ENCODE measurements at regions of chr4 and their contacts with region 1.

Region 1: DNA sequence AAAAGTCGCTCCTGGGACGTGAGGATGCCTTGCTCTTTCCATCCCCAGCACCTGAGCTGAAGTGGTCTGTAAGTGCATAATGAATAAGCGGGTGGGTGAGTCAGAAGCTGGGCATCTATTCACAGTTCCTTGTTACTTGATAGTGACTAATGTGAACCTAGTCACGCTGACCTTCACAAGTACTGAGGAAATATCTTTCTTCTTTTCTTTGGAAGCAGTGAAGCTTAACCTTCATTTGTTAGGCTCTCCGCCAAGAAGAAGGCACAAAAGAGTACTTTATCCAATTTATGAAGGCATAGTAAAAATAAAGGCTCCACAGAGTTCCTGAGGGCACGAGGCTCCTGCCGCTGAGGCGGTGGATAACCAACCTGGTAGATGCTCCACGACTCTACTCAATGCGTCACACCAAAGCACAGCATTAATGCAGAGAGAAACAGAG is 475.7 kb upstream of the SLIT2 start:
- DNase-seq: peak; percentile 96
- ATAC-seq: peak; percentile 93
- H3K4me3 ChIP-seq: peak overlapping the region; percentile 43; the same call in 1 of the 2 replicates
- H3K27ac ChIP-seq: peak overlapping the region; percentile 85
- H3K4me1 ChIP-seq: peaks cover 30% of the 10 kb centered on the region
- H3K27me3 ChIP-seq: no peaks in the 10 kb centered on the region
- CTCF ChIP-seq: no peak

Region 2: DNA sequence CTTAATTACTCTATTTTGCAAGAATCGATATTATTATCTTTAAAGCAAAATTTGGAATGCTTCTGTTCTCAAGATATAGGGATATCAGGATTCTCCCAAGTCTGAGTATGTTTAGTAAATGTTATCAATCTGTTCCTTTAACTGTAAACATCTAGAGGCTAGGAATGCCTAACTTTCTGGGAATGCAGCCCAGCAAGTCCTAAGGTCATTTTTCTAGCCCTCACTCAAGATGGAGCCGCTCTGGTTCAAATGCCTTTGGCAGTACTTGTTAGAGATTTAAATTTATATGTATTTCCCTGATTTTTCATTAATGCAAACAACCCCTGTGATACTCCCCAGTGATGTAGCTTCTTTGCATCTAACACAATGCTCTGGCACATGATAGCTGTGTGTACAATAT is 1130.7 kb before region 1 on chr4:
- CTCF ChIA-PET with region 1: no interaction called
- POLR2A ChIA-PET with region 1: interaction called, 19 read pairs
- intact Hi-C with region 1: no loop called
- DNase-seq: no peak
- ATAC-seq: no peak
- H3K4me3 ChIP-seq: no peak overlapping the region
- H3K27ac ChIP-seq: no peak overlapping the region
- H3K4me1 ChIP-seq: no peaks in the 10 kb centered on the region
- H3K27me3 ChIP-seq: no peaks in the 10 kb centered on the region
- CTCF ChIP-seq: no peak

Region 3: DNA sequence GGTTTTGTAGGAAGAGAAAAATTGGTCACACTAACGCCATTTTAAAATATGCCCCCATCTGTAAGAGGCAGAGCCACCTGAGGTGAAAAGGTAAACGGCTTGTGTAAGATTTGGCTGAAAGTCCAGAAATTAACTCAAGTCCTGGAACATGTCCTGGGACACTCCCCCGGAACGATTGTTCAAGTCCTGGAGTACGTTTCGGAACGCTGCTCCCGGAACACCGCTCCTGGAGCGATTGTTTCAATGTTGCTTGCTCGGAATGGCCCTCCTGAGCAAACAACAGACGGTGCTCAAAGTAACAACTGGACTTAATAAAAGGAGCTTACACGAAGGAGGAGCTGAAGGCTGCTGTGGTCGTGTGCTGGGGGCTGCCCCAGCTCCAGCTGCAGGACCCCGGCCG is 320.8 kb before region 1 on chr4:
- CTCF ChIA-PET with region 1: no interaction called
- POLR2A ChIA-PET with region 1: no interaction called
- intact Hi-C with region 1: no loop called
- DNase-seq: peak; percentile 72
- ATAC-seq: peak; percentile 37
- H3K4me3 ChIP-seq: peak overlapping the region; percentile 97
- H3K27ac ChIP-seq: peak overlapping the region; percentile 61
- H3K4me1 ChIP-seq: peaks cover 11% of the 10 kb centered on the region
- H3K27me3 ChIP-seq: no peaks in the 10 kb centered on the region
- CTCF ChIP-seq: no peak

Region 4: DNA sequence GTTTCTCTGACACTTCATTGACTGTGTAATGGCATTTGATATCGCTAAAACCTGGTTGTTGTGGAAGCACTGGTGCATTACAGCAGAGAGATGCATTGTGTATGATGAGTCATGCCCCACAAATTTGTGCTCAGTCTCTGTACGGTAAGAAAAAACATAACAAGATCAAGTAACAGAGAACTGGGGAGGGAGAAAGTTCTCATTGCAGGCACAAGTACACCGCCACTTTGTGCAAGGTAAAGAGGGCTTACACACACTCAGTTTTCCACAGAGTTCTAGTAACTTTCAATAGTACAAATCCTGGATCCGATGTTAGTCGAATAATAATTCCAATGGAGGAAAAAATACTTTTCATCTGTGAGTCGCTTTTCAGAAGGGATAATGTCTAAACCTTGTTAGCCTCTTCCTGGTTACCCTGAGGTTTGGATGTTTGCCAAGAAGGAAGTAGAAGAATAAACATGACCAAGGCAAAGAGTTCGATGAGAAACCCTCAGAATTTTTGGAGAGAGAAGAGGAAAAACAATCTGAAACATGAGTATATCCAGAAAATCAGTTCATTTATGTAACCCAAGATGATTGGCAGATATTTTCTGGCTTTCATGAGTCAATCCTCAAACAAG is 36.8 kb before region 1 on chr4:
- CTCF ChIA-PET with region 1: no interaction called
- POLR2A ChIA-PET with region 1: no interaction called
- intact Hi-C with region 1: loop called (anchors 1 kb)
- DNase-seq: peak; percentile 84
- ATAC-seq: peak; percentile 96
- H3K4me3 ChIP-seq: peak overlapping the region; percentile 60
- H3K27ac ChIP-seq: peak overlapping the region; percentile 98
- H3K4me1 ChIP-seq: peaks cover 29% of the 10 kb centered on the region
- H3K27me3 ChIP-seq: no peaks in the 10 kb centered on the region
- CTCF ChIP-seq: no peak

Region 5: GRCh38 chr4:19748519-19749479 is 27.2 kb before region 1 on chr4:
- CTCF ChIA-PET with region 1: no interaction called
- POLR2A ChIA-PET with region 1: no interaction called
- intact Hi-C with region 1: loop called (anchors 1 kb)
- DNase-seq: peak; percentile 79
- ATAC-seq: peak; percentile 95
- H3K4me3 ChIP-seq: no peak overlapping the region
- H3K27ac ChIP-seq: peak overlapping the region; percentile 85
- H3K4me1 ChIP-seq: peaks cover 25% of the 10 kb centered on the region
- H3K27me3 ChIP-seq: no peaks in the 10 kb centered on the region
- CTCF ChIP-seq: no peak

Region 6: GRCh38 chr4:19971829-19972228 is 195.8 kb after region 1 on chr4:
- CTCF ChIA-PET with region 1: no interaction called
- POLR2A ChIA-PET with region 1: no interaction called
- intact Hi-C with region 1: no loop called
- DNase-seq: peak; percentile 70
- ATAC-seq: peak; percentile 46; the same call in 1 of the 2 replicates
- H3K4me3 ChIP-seq: no peak overlapping the region
- H3K27ac ChIP-seq: no peak overlapping the region
- H3K4me1 ChIP-seq: peaks cover 12% of the 10 kb centered on the region
- H3K27me3 ChIP-seq: no peaks in the 10 kb centered on the region
- CTCF ChIP-seq: no peak

Region 7: DNA sequence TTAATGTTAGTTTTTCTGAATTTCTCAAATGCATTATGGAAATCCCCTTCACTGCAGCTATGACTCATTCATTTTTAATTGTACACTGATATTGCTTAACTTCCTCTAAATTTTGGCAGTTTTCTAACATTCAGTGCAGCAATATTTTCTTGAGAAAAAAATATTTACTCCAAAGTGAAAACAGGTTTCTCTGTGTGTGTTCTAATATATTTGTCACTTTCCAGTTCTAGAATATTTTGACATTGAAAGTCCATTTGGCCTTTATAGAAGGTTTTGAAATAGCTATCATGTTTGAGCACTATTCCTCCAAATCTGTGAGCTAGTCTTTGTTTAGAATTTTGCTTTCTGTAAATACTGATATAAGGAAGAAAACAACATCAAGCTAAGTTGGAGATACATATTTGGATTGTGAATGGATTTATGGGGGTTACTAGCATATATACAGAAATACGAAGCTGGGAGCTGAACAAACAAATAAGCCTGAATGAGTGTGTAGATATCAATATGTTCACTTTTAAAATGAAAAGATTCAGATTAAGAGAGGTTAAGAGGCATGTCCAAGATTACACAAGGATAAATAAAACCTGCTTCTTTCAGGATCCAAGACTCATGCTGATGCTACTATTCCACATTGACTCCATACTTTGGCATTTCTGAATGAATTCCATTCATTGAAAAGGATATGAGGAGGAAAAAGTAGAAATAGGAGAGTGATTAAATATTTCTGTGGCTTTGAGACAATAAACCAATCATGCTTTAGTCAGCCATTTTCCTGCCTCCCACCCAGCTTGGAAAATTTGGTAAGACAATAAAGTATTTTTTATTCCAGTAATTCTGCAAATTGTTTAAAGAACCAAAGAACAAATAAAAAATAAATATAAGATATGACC is 418.3 kb after region 1 on chr4:
- CTCF ChIA-PET with region 1: no interaction called
- POLR2A ChIA-PET with region 1: no interaction called
- intact Hi-C with region 1: loop called (anchors 10 kb)
- DNase-seq: peak; percentile 87
- ATAC-seq: peak; percentile 50
- H3K4me3 ChIP-seq: peak overlapping the region; percentile 46; the same call in 1 of the 2 replicates
- H3K27ac ChIP-seq: peak overlapping the region; percentile 100
- H3K4me1 ChIP-seq: peaks cover 64% of the 10 kb centered on the region
- H3K27me3 ChIP-seq: no peaks in the 10 kb centered on the region
- CTCF ChIP-seq: no peak